ENCODE measurements at regions of chr3 and their contacts with region 1.

Region 1: DNA sequence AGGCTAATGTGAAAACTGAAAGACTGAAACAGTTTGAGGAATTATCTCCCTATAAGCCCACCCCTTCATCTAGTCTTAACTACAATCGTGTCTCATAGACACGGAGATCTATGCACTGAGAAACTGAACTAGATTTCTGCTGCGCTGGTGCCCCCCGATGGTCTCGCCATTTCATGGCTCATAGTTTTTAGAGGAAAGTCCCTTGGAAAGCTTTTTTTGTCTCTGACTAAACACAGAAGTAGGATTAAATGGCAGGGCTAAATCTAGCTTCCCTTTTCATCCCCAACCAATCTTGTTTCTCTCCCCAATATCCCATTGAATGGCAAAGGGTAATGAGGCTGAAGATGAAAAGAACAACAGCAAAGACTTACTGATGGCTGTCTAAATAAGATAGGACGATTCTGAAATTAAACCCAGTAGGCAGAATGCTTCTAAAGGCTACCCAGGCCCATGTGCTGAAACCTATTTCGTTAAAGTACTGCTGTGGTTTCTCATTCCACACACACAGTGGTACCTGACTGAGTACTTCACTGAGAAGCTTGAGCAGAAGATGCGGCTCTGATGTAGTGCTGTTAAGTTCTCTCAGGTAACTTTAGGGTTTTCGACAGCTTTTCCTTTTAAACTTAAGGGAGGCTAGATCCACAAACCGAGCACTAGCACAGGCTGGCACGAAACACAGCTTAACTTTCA is 142.7 kb downstream of the GADL1 start:
- DNase-seq: peak; percentile 12 to 20
- H3K4me3 ChIP-seq: no peak overlapping the region
- H3K27ac ChIP-seq: no peak overlapping the region
- H3K4me1 ChIP-seq: no peaks in the 10 kb centered on the region
- H3K27me3 ChIP-seq: no peaks in the 10 kb centered on the region
- CTCF ChIP-seq: peak in 2 of 6 experiments; percentile 11 to 30
- POLR2A ChIP-seq: no peak

Region 2: DNA sequence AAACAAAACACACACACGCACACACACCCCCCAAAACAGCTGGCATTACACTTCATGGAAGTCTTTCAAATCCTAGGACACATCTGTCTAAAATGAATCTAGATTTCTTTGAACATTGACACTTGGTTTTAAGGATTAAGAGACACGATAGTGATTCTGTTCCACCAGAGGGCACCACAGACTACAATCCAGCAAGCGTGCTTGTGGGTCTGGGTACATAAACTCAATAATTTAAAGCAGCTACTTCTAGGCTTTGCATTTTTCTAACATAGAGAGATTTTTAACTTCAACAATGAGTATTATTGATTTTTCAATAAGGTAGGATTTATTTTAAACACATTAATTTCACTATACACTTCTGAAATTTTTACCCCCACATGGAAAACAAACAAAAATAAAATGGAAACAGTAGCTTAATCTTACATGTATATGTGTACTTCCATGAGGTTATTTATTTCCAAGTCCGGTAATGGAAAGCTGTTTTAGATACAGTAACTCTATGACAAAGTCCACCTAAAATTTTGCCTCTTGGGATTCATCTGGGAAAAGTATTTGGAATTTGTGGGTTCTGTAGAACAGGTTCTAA is 709.4 kb before region 1 on chr3:
- intact Hi-C with region 1: loop called (anchors 10 kb)
- DNase-seq: peak; percentile 51 to 60
- H3K4me3 ChIP-seq: no peak overlapping the region
- H3K27ac ChIP-seq: no peak overlapping the region
- H3K4me1 ChIP-seq: no peaks in the 10 kb centered on the region
- H3K27me3 ChIP-seq: no peaks in the 10 kb centered on the region
- CTCF ChIP-seq: peak; percentile 40 to 71 (median 68)
- POLR2A ChIP-seq: no peak

Region 3: GRCh38 chr3:30871720-30872119 is 120.0 kb after region 1 on chr3:
- intact Hi-C with region 1: no loop called
- DNase-seq: no peak
- H3K4me3 ChIP-seq: no peak overlapping the region
- H3K27ac ChIP-seq: no peak overlapping the region
- H3K4me1 ChIP-seq: no peaks in the 10 kb centered on the region
- H3K27me3 ChIP-seq: no peaks in the 10 kb centered on the region
- CTCF ChIP-seq: no peak
- POLR2A ChIP-seq: no peak